ENCODE measurements at regions of chr9 and their contacts with region 1.

Region 1: GRCh38 chr9:136849038-136849959 is at the start of gene PHPT1:
- DNase-seq: peak; percentile 99
- H3K4me3 ChIP-seq: peak within 1 kb of the TSS; percentile 87
- H3K27ac ChIP-seq: peak within 1 kb of the TSS; percentile 55
- H3K4me1 ChIP-seq: peaks cover 10% of the 10 kb centered on the region
- CTCF ChIP-seq: no peak
- total RNA-seq, gene PHPT1: 56.9 and 81.9 TPM in 2 replicates

Region 2: GRCh38 chr9:136807281-136808074 is 41.8 kb before region 1 on chr9 and contains the start of gene RABL6:
- CTCF ChIA-PET with region 1: no interaction called
- POLR2A ChIA-PET with region 1: no interaction called
- intact Hi-C with region 1: loop called (anchors 2 kb)
- DNase-seq: peak; percentile 86
- H3K4me3 ChIP-seq: peak within 1 kb of the TSS; percentile 100
- H3K27ac ChIP-seq: peak within 1 kb of the TSS; percentile 73
- H3K4me1 ChIP-seq: peaks cover 28% of the 10 kb centered on the region
- CTCF ChIP-seq: no peak
- total RNA-seq, gene RABL6: 97.0 and 113 TPM in 2 replicates

Region 3: DNA sequence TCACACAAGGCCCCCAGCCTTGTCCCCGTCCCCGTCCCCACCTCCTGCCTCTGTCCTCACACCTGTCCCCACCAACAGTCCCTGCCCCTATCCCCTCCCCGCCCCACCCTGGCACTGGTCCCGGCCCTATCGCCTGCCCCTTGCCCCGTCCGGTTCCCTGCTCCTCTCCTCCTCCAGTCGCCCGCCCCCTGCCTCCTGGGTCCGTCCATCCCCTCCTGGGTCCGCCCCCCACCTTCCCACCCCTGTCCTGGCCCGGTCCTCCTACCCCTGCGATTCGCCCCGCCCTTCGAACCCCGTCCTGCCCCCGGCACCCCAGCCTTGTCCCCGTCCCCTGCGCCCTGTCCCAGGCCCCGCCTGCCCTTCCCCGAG is 16.4 kb after region 1 on chr9:
- CTCF ChIA-PET with region 1: no interaction called
- POLR2A ChIA-PET with region 1: no interaction called
- intact Hi-C with region 1: loop called (anchors 1 kb)
- DNase-seq: no peak
- H3K4me3 ChIP-seq: peak overlapping the region; percentile 92
- H3K27ac ChIP-seq: no peak overlapping the region
- H3K4me1 ChIP-seq: peaks cover 13% of the 10 kb centered on the region
- CTCF ChIP-seq: no peak

Region 4: GRCh38 chr9:136978073-136978864 is 129.0 kb after region 1 on chr9:
- CTCF ChIA-PET with region 1: no interaction called
- POLR2A ChIA-PET with region 1: no interaction called
- intact Hi-C with region 1: no loop called
- DNase-seq: peak; percentile 59
- H3K4me3 ChIP-seq: no peak overlapping the region
- H3K27ac ChIP-seq: no peak overlapping the region
- H3K4me1 ChIP-seq: no peaks in the 10 kb centered on the region
- CTCF ChIP-seq: no peak